ENCODE measurements at regions of chr7 and their contacts with region 1.

Region 1: GRCh38 chr7:47818796-47819606 is 129.3 kb downstream of the PKD1L1 start:
- DNase-seq: peak in 1 of 2 donors; percentile 52
- ATAC-seq: peak in 2 of 3 donors; percentile 31 to 56
- H3K4me3 ChIP-seq: no peak overlapping the region
- H3K4me3 Mint-ChIP-seq: no peak overlapping the region
- H3K27ac ChIP-seq: no peak overlapping the region
- H3K27ac Mint-ChIP-seq: no peak overlapping the region
- H3K4me1 ChIP-seq: no peaks in the 10 kb centered on the region
- H3K4me1 Mint-ChIP-seq: no peaks in the 10 kb centered on the region
- H3K27me3 ChIP-seq: no peaks in the 10 kb centered on the region
- H3K27me3 Mint-ChIP-seq: no peaks in the 10 kb centered on the region
- CTCF ChIP-seq: peak; percentile 79

Region 2: GRCh38 chr7:47444379-47445057 is 374.5 kb before region 1 on chr7:
- intact Hi-C with region 1: loop called (anchors 1 kb)
- DNase-seq: no peak
- ATAC-seq: no peak
- H3K4me3 ChIP-seq: no peak overlapping the region
- H3K4me3 Mint-ChIP-seq: no peak overlapping the region
- H3K27ac ChIP-seq: no peak overlapping the region
- H3K27ac Mint-ChIP-seq: no peak overlapping the region
- H3K4me1 ChIP-seq: no peaks in the 10 kb centered on the region
- H3K4me1 Mint-ChIP-seq: no peaks in the 10 kb centered on the region
- H3K27me3 ChIP-seq: no peaks in the 10 kb centered on the region
- H3K27me3 Mint-ChIP-seq: no peaks in the 10 kb centered on the region
- CTCF ChIP-seq: no peak

Measured in natural killer cell (primary cell).